HEK293 (cell line): ENCODE measurements at regions of chr16 and their contacts with region 1.

Region 1: GRCh38 chr16:73956587-73957494 is 339.8 kb upstream of the PSMD7 start:
- H3K4me3 ChIP-seq: no peak overlapping the region
- H3K27ac ChIP-seq: no peak overlapping the region
- H3K4me1 ChIP-seq: no peaks in the 10 kb centered on the region
- CTCF ChIP-seq: peak; percentile 32; the same call in 1 of the 2 replicates

Region 2: DNA sequence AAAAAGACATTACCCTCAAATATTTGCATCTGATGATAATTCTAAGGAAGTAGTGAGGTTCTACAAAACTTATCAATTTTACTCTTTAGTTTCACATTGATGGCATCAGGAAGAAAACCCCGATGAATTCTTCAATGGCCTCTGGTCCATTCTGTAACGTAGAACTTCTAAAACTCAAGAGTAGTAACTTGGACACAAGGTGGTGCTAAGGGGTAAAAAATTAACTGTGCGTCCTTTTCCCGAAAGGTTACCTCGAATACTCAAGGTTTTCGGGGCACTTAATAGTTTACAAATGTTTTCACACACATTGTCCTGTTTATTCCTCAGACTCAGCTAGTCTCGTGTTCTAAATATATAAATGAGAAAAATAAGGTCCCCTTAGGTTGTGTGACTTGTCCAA is 391.6 kb before region 1 on chr16:
- CTCF ChIA-PET with region 1: interaction called, 11 read pairs
- POLR2A ChIA-PET with region 1: no interaction called
- H3K4me3 ChIP-seq: no peak overlapping the region
- H3K27ac ChIP-seq: no peak overlapping the region
- H3K4me1 ChIP-seq: no peaks in the 10 kb centered on the region
- CTCF ChIP-seq: no peak

Region 3: GRCh38 chr16:73966851-73967250 is 10.0 kb after region 1 on chr16:
- CTCF ChIA-PET with region 1: interaction called, 14 read pairs
- POLR2A ChIA-PET with region 1: no interaction called
- H3K4me3 ChIP-seq: no peak overlapping the region
- H3K27ac ChIP-seq: no peak overlapping the region
- H3K4me1 ChIP-seq: no peaks in the 10 kb centered on the region
- CTCF ChIP-seq: no peak